ENCODE measurements at regions of chr5 and their contacts with region 1.

Region 1: GRCh38 chr5:138083702-138084101 is at the start of gene WNT8A:
- DNase-seq: no peak
- ATAC-seq: no peak
- H3K4me3 ChIP-seq: no peak within 1 kb of the TSS
- H3K27ac ChIP-seq: no peak within 1 kb of the TSS
- H3K4me1 ChIP-seq: no peaks in the 10 kb centered on the region
- H3K27me3 ChIP-seq: no peaks in the 10 kb centered on the region
- CTCF ChIP-seq: no peak
- total RNA-seq, gene WNT8A: not detected

Region 2: DNA sequence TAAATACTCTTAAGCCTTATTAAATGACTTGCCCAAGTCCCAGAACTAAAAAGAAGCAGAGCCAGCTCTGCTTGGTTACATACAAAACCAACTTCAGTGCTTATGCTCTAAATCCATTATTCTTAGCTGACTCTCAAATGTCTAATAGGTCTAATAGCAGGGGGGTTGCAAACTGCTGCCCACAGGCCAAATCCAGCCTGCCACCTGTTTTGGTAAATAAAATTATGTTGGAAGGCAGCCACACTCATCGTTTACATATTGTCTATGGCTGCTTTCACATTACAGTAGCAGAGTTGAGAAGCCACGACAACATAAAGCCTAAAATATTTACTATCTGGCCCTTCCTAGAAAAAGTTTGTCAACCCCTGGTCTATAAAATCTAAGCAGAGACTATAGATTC is 416.8 kb before region 1 on chr5:
- intact Hi-C with region 1: no loop called
- DNase-seq: no peak
- ATAC-seq: no peak
- H3K4me3 ChIP-seq: no peak overlapping the region
- H3K27ac ChIP-seq: no peak overlapping the region
- H3K4me1 ChIP-seq: peaks cover 14% of the 10 kb centered on the region
- H3K27me3 ChIP-seq: no peaks in the 10 kb centered on the region
- CTCF ChIP-seq: no peak

Region 3: GRCh38 chr5:138138949-138139780 is 55.5 kb after region 1 on chr5 and contains the start of gene NME5:
- intact Hi-C with region 1: loop called (anchors 10 kb)
- DNase-seq: peak; percentile 84
- ATAC-seq: peak; percentile 95
- H3K4me3 ChIP-seq: peak within 1 kb of the TSS; percentile 62
- H3K27ac ChIP-seq: no peak within 1 kb of the TSS
- H3K4me1 ChIP-seq: peaks cover 4% of the 10 kb centered on the region
- H3K27me3 ChIP-seq: no peaks in the 10 kb centered on the region
- CTCF ChIP-seq: no peak
- total RNA-seq, gene NME5: 2.4 TPM

Measured in upper lobe of right lung (tissue), 1 donor.